ENCODE measurements at regions of chr7 and their contacts with region 1.

Region 1: GRCh38 chr7:134432296-134433152 is 26.4 kb downstream of the AKR1B1 start:
- DNase-seq: peak; percentile 91
- ATAC-seq: peak; percentile 97
- H3K4me3 ChIP-seq: peak overlapping the region; percentile 43
- H3K27ac ChIP-seq: peak overlapping the region; percentile 51
- H3K4me1 ChIP-seq: peaks cover 8% of the 10 kb centered on the region
- H3K27me3 ChIP-seq: peaks cover 2% of the 10 kb centered on the region
- CTCF ChIP-seq: peak; percentile 84
- POLR2A ChIP-seq: no peak
- RAD21 ChIP-seq: peak; percentile 92

Region 2: DNA sequence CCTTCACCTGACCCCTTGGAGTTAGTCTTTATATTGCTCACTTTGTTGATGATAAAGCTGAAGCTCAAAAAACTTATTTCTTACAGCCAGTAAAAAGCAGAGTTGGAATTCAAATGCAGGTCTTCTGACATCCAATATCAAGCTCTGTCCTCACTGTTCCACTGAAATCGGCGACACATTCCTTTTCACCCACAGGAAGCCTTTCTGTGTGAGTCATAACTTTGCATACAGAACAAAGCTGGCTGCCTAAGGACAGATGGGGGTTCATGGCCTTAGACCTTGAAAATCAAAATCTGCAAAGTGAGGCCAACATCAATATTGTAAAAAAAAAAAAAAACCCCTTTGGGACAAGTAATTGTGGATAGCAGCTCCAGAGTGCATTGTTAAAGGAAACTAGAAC is 48.2 kb after region 1 on chr7:
- CTCF ChIA-PET with region 1: interaction called, 33 read pairs
- POLR2A ChIA-PET with region 1: no interaction called
- dilution Hi-C with region 1: no loop called
- in situ Hi-C with region 1: no loop called
- intact Hi-C with region 1: loop called (anchors 1 kb)
- DNase-seq: peak; percentile 35
- ATAC-seq: peak; percentile 79
- H3K4me3 ChIP-seq: no peak overlapping the region
- H3K27ac ChIP-seq: no peak overlapping the region
- H3K4me1 ChIP-seq: peaks cover 4% of the 10 kb centered on the region
- H3K27me3 ChIP-seq: no peaks in the 10 kb centered on the region
- CTCF ChIP-seq: no peak
- POLR2A ChIP-seq: no peak
- RAD21 ChIP-seq: no peak

Region 3: GRCh38 chr7:134514663-134515062 is 82.1 kb after region 1 on chr7:
- CTCF ChIA-PET with region 1: interaction called, 43 read pairs
- POLR2A ChIA-PET with region 1: no interaction called
- dilution Hi-C with region 1: no loop called
- in situ Hi-C with region 1: loop called (anchors 5 kb)
- intact Hi-C with region 1: loop called (anchors 1 kb)
- DNase-seq: peak; percentile 83
- ATAC-seq: peak; percentile 66
- H3K4me3 ChIP-seq: no peak overlapping the region
- H3K27ac ChIP-seq: no peak overlapping the region
- H3K4me1 ChIP-seq: peaks cover 2% of the 10 kb centered on the region; the same call in 1 of the 2 replicates
- H3K27me3 ChIP-seq: no peaks in the 10 kb centered on the region
- CTCF ChIP-seq: peak; percentile 80
- POLR2A ChIP-seq: no peak
- RAD21 ChIP-seq: peak; percentile 61

Region 4: GRCh38 chr7:134547397-134548054 is 115.0 kb after region 1 on chr7:
- CTCF ChIA-PET with region 1: interaction called, 16 read pairs
- POLR2A ChIA-PET with region 1: no interaction called
- dilution Hi-C with region 1: no loop called
- in situ Hi-C with region 1: no loop called
- intact Hi-C with region 1: loop called (anchors 1 kb)
- DNase-seq: peak; percentile 74
- ATAC-seq: peak; percentile 97
- H3K4me3 ChIP-seq: peak overlapping the region; percentile 55
- H3K27ac ChIP-seq: peak overlapping the region; percentile 6; the same call in 1 of the 2 replicates
- H3K4me1 ChIP-seq: no peaks in the 10 kb centered on the region
- H3K27me3 ChIP-seq: peaks cover 22% of the 10 kb centered on the region
- CTCF ChIP-seq: peak; percentile 76
- POLR2A ChIP-seq: no peak
- RAD21 ChIP-seq: peak; percentile 53

Region 5: DNA sequence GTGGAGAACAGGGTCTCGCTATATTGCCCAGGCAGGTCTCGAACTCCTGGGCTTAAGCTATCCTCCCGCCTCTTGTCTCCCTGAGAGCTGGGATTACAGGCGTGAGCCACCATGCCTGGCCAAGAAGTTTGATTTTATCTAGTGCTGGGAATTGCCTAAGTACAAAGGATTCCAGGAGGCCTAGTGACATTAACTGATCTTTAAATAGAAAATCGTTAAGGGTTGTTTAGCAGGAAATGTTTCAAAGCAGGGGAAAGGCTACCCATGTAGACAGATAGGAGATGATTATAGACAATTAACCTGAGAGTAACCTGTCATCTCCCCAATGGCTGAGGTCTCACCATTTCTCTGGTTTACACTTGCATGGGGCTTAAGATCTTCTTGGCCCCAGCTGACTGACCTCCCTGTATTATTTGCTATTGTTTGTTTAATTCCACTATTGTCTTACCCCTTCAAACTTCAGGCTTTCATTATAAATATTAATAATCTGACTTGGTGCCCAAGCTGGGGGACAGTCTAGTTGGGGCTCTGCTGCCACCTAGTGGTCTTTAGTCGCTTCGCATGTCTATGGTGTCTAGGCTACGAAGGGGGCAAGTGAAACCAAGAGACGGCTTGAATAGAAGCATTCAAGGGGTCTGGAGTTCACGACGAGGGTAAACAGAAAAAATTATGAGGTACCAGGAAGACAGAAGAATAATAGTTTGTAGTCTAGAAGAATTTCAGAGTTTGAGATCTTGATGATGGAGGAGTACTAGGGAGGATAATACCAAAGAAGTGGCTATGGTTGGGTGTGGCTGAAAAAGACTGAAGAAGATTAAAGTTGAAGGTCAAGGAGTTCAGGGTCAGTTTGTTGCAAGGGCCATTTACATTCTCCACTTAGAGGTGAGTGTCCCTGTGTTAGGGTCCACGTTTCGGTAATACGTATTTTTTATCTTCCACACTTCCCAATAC is 173.7 kb after region 1 on chr7:
- CTCF ChIA-PET with region 1: interaction called, 14 read pairs
- POLR2A ChIA-PET with region 1: no interaction called
- dilution Hi-C with region 1: no loop called
- in situ Hi-C with region 1: no loop called
- intact Hi-C with region 1: loop called (anchors 1 kb)
- DNase-seq: peak; percentile 67
- ATAC-seq: peak; percentile 95
- H3K4me3 ChIP-seq: no peak overlapping the region
- H3K27ac ChIP-seq: no peak overlapping the region
- H3K4me1 ChIP-seq: peaks cover 3% of the 10 kb centered on the region; the same call in 1 of the 2 replicates
- H3K27me3 ChIP-seq: no peaks in the 10 kb centered on the region
- CTCF ChIP-seq: peak; percentile 94
- POLR2A ChIP-seq: no peak
- RAD21 ChIP-seq: peak; percentile 90

Region 6: DNA sequence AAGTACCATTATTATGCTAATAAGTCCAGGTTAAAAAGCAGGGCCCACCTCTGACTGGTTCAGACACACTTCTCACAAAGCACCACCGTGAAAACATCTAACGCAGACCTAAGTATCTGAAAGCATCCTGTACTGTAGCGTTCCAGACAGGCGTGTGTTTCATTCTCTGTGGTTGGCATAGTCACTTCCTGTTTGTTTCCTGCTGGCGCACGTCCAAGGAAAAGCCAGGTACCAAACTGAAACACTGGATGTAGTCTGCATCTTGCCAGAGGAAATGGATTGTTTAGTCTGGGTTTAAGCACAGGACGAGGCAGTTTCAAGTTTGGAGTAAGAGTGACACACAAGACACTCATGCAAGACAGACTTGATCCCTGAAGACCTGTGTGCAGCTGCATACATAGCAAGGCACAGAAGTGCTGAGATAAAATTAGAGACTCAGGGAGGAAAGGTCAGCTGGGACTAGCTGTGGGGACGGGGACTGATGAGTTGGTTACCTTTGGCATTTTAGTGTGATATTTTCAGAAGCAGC is 237.4 kb after region 1 on chr7:
- CTCF ChIA-PET with region 1: no interaction called
- POLR2A ChIA-PET with region 1: no interaction called
- dilution Hi-C with region 1: no loop called
- in situ Hi-C with region 1: no loop called
- intact Hi-C with region 1: loop called (anchors 10 kb)
- DNase-seq: peak; percentile 96
- ATAC-seq: peak; percentile 83
- H3K4me3 ChIP-seq: no peak overlapping the region
- H3K27ac ChIP-seq: no peak overlapping the region
- H3K4me1 ChIP-seq: peaks cover 12% of the 10 kb centered on the region
- H3K27me3 ChIP-seq: no peaks in the 10 kb centered on the region
- CTCF ChIP-seq: no peak
- POLR2A ChIP-seq: 0 out of 2 replicates have a peak, but pooled peaks have one; percentile 29
- RAD21 ChIP-seq: no peak

Region 7: DNA sequence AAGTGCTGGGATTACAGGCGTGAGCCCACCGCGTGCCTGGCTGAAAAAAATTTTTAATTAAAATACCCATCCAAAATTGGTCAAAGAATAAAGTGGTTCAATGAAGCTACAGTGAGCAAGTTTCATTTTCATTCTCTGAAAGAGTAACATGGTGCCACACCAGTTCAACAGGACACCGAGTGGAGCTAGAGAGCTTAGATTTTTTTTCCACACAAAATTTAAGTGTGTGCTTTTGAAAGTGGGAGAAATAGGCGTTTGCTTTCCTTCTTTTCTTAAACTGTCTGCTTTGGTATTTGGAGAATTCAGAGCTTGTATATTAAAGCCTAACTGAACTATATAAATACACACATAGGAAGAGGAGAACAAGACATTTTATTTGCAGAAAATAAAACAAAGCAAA is 257.5 kb after region 1 on chr7:
- CTCF ChIA-PET with region 1: no interaction called
- POLR2A ChIA-PET with region 1: no interaction called
- dilution Hi-C with region 1: no loop called
- in situ Hi-C with region 1: no loop called
- intact Hi-C with region 1: no loop called
- DNase-seq: peak; percentile 81
- ATAC-seq: peak; percentile 77
- H3K4me3 ChIP-seq: no peak overlapping the region
- H3K27ac ChIP-seq: peak overlapping the region; percentile 70; the same call in 1 of the 2 replicates
- H3K4me1 ChIP-seq: peaks cover 31% of the 10 kb centered on the region
- H3K27me3 ChIP-seq: no peaks in the 10 kb centered on the region
- CTCF ChIP-seq: peak; percentile 77
- POLR2A ChIP-seq: no peak
- RAD21 ChIP-seq: peak; percentile 79

Region 8: GRCh38 chr7:135111379-135111778 is 678.9 kb after region 1 on chr7:
- CTCF ChIA-PET with region 1: no interaction called
- POLR2A ChIA-PET with region 1: no interaction called
- dilution Hi-C with region 1: no loop called
- in situ Hi-C with region 1: no loop called
- intact Hi-C with region 1: no loop called
- DNase-seq: no peak
- ATAC-seq: no peak
- H3K4me3 ChIP-seq: no peak overlapping the region
- H3K27ac ChIP-seq: no peak overlapping the region
- H3K4me1 ChIP-seq: no peaks in the 10 kb centered on the region
- H3K27me3 ChIP-seq: peaks cover 3% of the 10 kb centered on the region
- CTCF ChIP-seq: no peak
- POLR2A ChIP-seq: no peak
- RAD21 ChIP-seq: no peak